Left cardiac atrium (tissue), 4 donors: ENCODE measurements at regions of chr15 and their contacts with region 1.

Region 1: DNA sequence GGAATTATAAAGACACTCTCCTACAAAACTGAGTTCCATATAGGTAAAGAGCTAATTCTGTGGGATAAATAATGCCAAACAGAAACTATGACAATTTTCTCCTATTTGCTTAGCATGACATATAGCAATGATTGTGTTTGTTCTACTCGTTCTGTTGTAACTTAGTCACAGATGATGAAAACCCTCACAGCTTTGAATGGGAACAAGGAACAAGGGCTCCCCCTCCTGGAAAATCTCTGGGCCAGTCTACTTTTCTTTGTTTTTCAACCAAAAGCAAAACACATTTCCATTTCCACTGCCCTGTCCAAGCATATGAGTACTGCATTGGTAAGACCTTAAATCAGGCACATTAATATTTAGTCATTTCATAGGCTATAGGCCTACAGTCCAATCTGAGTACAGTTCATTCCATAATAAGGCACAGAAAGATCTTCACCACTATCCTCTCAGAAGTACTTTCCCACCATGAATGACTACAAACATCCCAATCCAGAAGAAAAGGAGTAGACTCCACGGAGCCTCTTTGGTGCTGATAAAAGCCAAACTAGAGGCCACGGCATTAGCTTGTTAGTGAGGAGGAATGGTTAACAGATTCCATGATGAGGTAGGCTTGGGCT is 67.1 kb downstream of the ATP8B4 start:
- DNase-seq: peak; percentile 51
- ATAC-seq: peak; percentile 31 to 48

Region 2: GRCh38 chr15:49235446-49236124 is 816.3 kb before region 1 on chr15:
- intact Hi-C with region 1: loop called in 1 of 2 experiments (anchors 5 kb)
- DNase-seq: peak; percentile 33
- ATAC-seq: peak; percentile 86 to 92

Region 3: GRCh38 chr15:49876401-49877038 is 175.4 kb before region 1 on chr15:
- intact Hi-C with region 1: loop called in 1 of 2 experiments (anchors 5 kb)
- DNase-seq: no peak
- ATAC-seq: peak; percentile 31 to 77

Region 4: GRCh38 chr15:49990835-49991545 is 60.9 kb before region 1 on chr15:
- intact Hi-C with region 1: no loop called
- DNase-seq: no peak
- ATAC-seq: no peak

Region 5: GRCh38 chr15:50116473-50116872 is 64.6 kb after region 1 on chr15:
- intact Hi-C with region 1: no loop called
- DNase-seq: no peak
- ATAC-seq: no peak

Region 6: GRCh38 chr15:50145451-50145872 is 93.6 kb after region 1 on chr15:
- intact Hi-C with region 1: loop called in 1 of 2 experiments (anchors 10 kb)
- DNase-seq: no peak
- ATAC-seq: peak; percentile 90 to 93

Region 7: GRCh38 chr15:50964075-50964474 is 912.2 kb after region 1 on chr15:
- intact Hi-C with region 1: no loop called
- DNase-seq: no peak
- ATAC-seq: no peak